ENCODE measurements at regions of chr7 and their contacts with region 1.

Region 1: GRCh38 chr7:50849991-50850390 is 67.3 kb upstream of the GRB10 start:
- DNase-seq: no peak

Region 2: DNA sequence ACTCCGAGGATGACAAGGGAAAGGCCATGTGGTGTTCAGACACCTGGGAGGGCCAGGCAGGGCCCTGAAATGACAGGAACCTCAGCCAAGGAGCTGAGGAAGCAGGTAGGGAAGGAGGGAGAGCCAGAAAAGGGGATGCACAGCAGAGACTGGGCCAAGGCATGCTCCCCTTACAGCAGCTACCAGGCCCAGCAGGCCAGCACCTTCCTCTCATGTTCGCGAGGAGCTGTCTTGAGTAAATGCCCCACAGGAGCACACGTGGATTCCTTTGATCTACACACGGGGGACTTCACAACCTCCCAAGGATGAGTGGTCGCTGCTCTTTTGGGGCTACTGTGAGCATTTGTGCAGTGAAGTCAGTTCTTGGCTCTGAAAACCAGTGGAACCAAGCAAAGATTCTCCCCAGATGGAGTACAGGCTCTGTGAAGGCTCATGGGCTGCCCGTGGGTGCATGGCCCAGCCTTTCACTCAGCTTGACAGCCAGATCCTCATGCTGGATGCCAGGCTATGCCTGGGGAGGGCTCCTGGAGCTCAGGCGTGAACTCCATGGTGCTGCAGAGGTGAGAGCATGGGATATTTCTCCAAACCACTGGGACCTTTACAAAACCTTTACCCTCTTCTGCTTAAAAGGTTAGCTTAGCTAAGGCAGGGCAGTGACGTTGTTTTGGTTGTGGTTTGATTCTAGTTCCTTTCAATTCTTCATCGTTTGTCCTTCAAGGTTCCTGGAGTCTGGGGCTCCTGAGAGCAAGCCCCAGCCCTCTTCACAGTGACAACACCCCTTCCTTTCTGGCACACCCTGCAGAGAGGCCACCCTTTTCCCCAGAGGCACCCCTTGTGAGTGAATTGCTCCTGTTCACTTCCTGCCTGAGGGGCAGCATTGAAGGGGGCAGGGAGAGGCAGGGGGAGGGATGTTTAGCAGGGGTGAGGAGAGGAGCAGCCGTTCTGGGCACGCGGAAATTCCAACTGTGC is 682.7 kb before region 1 on chr7:
- intact Hi-C with region 1: no loop called
- DNase-seq: no peak

Region 3: DNA sequence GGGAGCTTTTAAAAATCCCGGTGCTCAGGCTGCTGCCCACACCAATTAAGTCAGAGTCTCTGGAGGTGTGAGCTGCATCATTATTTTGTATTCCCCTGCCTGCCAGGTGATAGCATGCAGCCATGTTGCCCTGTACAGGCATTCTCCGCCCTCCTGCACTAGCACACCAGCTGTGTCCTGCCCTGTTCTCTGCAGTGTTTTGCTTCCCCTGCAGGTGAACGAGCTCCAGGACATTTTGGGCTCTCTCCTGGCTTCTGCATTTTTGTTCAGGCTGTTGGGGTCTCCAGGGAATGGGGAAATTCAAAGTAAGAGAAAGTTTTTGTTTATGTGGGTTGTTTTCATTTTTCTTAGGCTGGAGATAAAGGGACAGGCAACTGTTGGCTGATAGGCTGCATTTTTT is 737.6 kb after region 1 on chr7:
- intact Hi-C with region 1: loop called in 1 of 2 experiments (anchors 5 kb)
- DNase-seq: no peak

Measured in posterior vena cava (tissue), 2 donors.